GM18951 (cell line): ENCODE measurements at regions of chr15 and their contacts with region 1.

Region 1: DNA sequence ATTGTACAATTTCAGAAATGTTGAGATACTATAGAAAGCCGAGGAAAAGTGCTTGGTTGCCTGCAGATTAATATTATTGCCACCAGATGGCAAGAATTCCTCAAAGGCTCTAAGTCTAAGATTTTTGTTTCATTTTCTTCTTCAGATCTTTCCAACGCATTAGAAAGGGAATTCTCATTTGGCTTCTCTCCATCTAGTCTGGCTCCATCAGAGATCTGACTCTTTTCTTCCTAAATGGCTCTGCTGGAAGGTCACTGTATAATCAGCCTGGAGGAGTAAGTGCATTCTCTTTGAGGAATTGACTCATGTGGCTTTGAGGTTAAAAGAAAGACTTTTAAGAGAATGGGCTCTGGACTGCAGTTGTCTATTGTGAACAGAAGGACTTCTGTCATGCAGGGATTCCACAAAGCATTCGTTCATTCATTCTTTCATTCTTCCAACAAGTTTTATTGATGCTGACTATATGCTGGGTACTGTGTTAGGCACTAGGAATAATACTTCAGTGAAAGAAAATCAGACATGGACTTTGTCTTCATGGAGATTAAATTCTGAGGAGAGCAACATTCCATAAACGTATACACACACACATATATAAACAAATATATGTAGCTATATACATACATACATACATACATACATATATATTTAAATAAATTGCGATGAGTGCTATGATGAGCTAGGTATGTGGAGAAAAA is 55.3 kb downstream of the SLC28A2 start:
- POLR2A ChIP-seq: no peak

Region 2: GRCh38 chr15:45221967-45222366 is 85.4 kb before region 1 on chr15:
- in situ Hi-C with region 1: no loop called
- POLR2A ChIP-seq: no peak

Region 3: GRCh38 chr15:45372041-45372995 is 64.9 kb after region 1 on chr15:
- in situ Hi-C with region 1: no loop called
- POLR2A ChIP-seq: no peak

Region 4: GRCh38 chr15:45386420-45386819 is 79.0 kb after region 1 on chr15:
- in situ Hi-C with region 1: loop called (anchors 10 kb)
- POLR2A ChIP-seq: no peak

Region 5: GRCh38 chr15:46127361-46127874 is 820.0 kb after region 1 on chr15:
- in situ Hi-C with region 1: no loop called
- POLR2A ChIP-seq: no peak